ENCODE measurements at regions of chr10 and their contacts with region 1.

Region 1: DNA sequence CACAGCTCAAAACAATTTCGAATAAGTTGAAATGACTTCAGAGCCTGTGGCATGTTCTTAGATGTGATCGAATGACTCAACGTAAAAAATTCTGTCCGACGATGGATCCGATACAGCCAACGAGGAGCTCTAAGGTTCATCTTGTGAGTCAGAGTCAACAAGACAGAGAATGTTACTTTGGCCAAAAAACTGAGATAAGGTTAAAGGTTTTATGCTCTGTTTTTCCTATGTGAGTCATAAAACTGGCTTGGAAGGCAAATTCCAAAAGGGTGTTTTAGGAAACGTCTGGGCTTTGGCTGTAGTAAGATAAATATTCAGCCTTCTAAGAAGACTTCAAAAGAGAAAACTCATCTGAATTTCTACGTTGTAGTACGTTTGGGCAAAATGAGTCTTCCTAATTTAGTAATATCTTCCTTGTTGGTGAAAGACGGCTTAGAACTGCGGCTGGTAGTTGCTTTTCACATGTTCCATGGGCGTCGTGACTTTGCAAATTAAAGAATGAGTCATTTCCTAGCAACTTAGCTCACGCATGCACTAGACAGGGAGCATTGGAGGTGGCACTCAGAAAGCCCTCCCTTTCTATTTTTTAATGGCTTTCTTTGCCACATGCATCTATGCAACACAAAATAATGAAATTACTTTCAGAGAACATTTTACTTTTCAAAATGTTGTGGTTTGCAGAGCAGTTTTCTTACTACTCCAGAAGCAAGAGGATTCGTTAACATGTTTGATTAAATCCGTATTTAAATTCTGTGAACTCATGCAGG is 28.2 kb downstream of the PFKP start:
- DNase-seq: peak; percentile 82
- ATAC-seq: peak; percentile 79
- H3K4me3 Mint-ChIP-seq: peak overlapping the region; percentile 5
- H3K27ac Mint-ChIP-seq: peak overlapping the region; percentile 74
- H3K4me1 Mint-ChIP-seq: peaks cover 65% of the 10 kb centered on the region
- H3K27me3 Mint-ChIP-seq: no peaks in the 10 kb centered on the region
- CTCF ChIP-seq: no peak

Region 2: DNA sequence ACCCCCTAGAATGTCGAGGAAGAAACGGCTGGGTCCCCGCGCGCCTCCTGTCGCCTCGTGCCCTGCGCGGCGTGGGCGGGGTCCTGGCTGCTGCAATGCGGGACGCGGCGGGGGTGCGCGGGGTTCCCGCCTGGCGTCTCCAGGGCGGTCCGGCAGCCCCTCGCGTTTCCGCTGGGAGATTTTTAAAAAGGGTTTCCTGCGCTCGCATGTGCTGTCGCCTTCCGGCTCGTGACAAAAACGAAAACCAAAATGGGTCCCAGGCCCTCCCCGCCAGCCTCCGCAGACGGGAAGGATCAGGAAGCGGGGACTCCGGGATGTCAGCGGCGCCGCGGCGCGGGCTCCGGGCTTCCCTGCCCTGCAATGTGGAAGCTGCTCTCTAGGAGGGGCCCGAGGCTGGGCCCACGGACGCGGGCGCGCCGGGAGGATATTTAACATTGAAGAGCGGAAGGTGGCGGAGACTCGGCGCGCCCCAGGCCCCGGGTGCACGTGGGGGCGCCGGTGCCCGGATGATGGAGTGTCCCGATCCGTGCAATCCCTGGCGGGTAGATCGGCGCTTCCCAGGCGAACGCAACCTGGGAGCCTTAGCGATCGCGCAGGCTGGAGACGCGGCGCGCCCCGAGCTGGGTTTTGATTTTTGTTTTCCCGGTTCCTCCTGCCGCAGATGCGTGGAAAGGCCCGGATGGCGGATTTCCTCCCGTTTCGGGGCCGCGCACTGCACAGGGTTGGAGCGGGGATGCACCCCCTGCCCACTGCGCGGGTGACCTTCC is 27.2 kb before region 1 on chr10:
- CTCF ChIA-PET with region 1: interaction called, 4 read pairs
- POLR2A ChIA-PET with region 1: interaction called, 35 read pairs
- intact Hi-C with region 1: no loop called
- DNase-seq: peak; percentile 78
- ATAC-seq: peak; percentile 43
- H3K4me3 Mint-ChIP-seq: peak overlapping the region; percentile 88
- H3K27ac Mint-ChIP-seq: peak overlapping the region; percentile 91
- H3K4me1 Mint-ChIP-seq: peaks cover 41% of the 10 kb centered on the region
- H3K27me3 Mint-ChIP-seq: peaks cover 9% of the 10 kb centered on the region
- CTCF ChIP-seq: no peak

Region 3: GRCh38 chr10:3077975-3078921 is 17.3 kb before region 1 on chr10:
- CTCF ChIA-PET with region 1: interaction called, 3 read pairs
- POLR2A ChIA-PET with region 1: interaction called, 35 read pairs
- intact Hi-C with region 1: no loop called
- DNase-seq: no peak
- ATAC-seq: no peak
- H3K4me3 Mint-ChIP-seq: no peak overlapping the region
- H3K27ac Mint-ChIP-seq: no peak overlapping the region
- H3K4me1 Mint-ChIP-seq: peaks cover 37% of the 10 kb centered on the region
- H3K27me3 Mint-ChIP-seq: no peaks in the 10 kb centered on the region
- CTCF ChIP-seq: no peak

Region 4: DNA sequence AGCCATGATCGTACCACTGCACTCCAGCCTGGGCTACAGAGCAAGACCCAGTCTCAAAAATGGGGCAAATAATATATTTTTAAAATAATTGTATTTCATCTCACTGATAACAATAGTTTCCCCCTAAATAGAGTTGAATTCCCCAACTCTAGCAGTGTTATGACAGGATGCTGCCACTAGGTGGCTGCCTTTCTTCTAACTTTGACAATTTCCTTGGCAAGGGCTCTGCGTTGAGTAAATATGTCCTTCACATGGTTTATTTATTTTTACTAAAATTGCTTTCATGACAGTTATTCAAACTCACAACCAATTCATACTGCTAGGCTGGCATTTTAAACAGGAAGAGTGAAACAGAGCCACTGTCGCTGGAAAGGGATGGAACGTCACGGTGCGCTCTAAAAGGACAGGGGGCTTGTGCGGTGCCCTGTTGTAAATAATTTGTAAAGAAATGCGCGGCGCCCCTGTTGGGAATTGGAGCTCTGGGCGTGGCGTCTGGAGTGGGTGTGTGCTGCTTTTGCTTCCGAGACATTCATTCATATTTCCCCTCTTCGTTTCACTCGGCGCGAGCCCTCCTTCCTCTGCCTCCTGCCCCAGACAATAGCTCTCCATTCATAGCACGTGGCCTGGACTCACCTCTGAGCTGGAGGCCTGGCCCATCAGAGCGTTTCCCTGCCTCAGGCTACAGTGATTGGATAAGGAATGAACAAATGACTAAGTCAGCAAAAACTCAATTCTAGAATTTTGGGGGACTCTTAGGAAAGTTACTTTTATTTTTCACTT is 97.5 kb after region 1 on chr10:
- CTCF ChIA-PET with region 1: no interaction called
- POLR2A ChIA-PET with region 1: no interaction called
- intact Hi-C with region 1: no loop called
- DNase-seq: peak; percentile 69
- ATAC-seq: peak; percentile 58
- H3K4me3 Mint-ChIP-seq: no peak overlapping the region
- H3K27ac Mint-ChIP-seq: no peak overlapping the region
- H3K4me1 Mint-ChIP-seq: peaks cover 7% of the 10 kb centered on the region
- H3K27me3 Mint-ChIP-seq: peaks cover 22% of the 10 kb centered on the region
- CTCF ChIP-seq: peak; percentile 96